Activated CD4-positive, alpha-beta memory T cell treated with anti-CD3 and anti-CD28 coated beads for 36 hours (primary cell): ENCODE measurements at regions of chr2 and their contacts with region 1.

Region 1: DNA sequence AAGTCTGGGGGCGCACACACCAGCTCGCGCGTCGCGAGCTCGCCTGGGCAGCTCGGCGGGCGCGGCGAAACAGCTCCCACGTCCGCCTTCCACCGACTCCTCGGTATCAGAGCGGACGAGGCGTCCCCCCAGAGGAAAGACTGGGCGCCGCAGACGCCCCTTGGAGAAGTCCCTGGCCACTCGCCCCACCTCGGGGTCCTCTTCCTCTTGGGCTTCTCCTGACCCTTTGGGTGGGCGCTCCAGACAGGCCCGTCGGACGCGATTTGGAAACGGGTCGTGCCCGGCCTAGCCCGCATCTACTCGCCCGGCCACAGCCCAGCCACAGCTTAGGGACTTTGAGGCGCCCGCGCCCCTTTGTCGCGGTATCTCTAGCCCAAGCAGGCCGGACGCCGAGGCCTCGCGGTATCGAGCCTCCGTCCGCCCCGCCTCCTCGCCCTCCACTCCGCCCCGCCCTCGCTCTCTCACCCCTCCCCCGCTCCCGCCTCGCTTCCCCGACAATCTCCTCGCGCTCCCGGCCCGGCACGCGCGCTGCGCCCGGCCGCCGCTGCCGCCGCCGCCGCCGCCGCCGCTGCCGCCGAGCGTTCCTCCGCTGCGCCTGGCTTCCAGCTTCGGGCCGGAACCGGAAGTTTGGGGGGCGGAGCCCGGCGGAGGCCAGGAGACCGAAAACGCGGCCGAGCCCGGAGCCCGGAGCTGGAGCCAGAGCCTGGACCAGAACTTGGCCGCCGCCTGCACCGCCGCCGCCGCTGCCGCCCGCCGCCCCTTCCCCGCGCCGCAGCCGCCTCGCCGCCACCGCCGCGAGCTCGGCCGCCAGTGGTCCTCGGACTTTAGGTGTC is 749 bp upstream of the ACVR2A start:
- DNase-seq: peak; percentile 91
- H3K4me3 Mint-ChIP-seq: peak overlapping the region; percentile 89
- H3K27ac Mint-ChIP-seq: peak overlapping the region; percentile 63
- H3K4me1 Mint-ChIP-seq: peaks cover 28% of the 10 kb centered on the region
- H3K27me3 Mint-ChIP-seq: peaks cover 8% of the 10 kb centered on the region

Region 2: DNA sequence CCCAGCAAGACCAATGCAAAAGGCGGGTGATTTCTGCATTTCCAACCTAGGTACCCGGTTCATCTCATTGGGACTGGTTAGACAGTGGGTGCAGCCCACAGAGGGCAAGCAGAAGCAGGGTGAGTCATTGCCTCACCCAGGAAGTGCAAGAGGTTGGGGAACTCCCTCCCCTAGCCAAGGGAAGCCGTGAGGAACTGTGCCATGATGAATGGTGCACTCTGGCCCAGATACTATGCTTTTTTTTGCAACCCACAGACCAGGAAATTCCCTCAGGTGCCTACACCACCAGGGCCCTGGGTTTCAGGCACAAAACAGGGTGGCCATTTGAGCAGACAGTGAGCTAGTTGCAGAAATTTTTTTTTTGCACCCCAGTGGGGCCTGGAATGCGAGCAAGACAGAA is 661.8 kb before region 1 on chr2:
- CTCF ChIA-PET with region 1: no interaction called
- POLR2A ChIA-PET with region 1: no interaction called
- intact Hi-C with region 1: loop called (anchors 10 kb)
- DNase-seq: peak; percentile 82
- H3K4me3 Mint-ChIP-seq: no peak overlapping the region
- H3K27ac Mint-ChIP-seq: peak overlapping the region; percentile 77
- H3K4me1 Mint-ChIP-seq: peaks cover 29% of the 10 kb centered on the region
- H3K27me3 Mint-ChIP-seq: no peaks in the 10 kb centered on the region

Region 3: DNA sequence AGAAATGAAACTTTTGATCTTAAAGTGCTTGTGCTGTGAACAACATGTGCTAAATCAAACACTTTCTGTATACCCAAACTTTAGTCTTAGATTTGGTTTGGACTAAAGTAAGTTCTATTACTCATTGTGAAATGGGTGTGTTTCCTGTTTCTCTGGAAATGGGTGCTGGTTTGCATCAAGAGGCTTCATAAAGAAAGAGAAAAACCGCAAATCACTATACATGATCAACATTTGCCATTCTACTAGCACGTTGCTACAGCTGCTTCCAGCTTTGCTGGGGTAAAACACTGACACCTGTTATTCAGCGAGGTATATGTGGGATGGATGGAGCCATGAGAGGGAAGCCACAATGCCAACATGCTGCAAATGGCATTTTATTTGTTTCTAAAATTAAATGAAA is 546.3 kb before region 1 on chr2:
- CTCF ChIA-PET with region 1: no interaction called
- POLR2A ChIA-PET with region 1: no interaction called
- intact Hi-C with region 1: loop called (anchors 2 kb)
- DNase-seq: peak; percentile 58
- H3K4me3 Mint-ChIP-seq: peak overlapping the region; percentile 39
- H3K27ac Mint-ChIP-seq: peak overlapping the region; percentile 89
- H3K4me1 Mint-ChIP-seq: peaks cover 73% of the 10 kb centered on the region
- H3K27me3 Mint-ChIP-seq: no peaks in the 10 kb centered on the region

Region 4: DNA sequence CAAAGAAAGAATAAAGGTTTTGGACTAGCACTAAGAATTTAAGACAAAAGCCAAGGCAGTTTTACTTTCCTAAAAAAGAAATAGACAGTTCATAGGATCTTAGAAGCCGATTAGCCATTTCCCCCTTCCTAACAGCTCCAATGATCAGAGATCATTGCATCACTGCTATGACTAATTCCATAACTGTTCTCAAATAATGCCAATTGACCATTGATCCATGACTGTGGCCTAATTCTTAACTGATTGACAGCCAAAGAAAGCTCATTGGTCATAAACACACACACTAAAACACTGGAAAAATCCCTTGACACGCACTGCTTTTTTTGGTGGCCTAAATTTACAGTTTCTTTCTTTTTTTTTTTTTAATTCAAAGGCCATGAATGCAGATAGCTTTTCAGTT is 344.3 kb before region 1 on chr2:
- CTCF ChIA-PET with region 1: no interaction called
- POLR2A ChIA-PET with region 1: no interaction called
- intact Hi-C with region 1: loop called (anchors 5 kb)
- DNase-seq: no peak
- H3K4me3 Mint-ChIP-seq: peak overlapping the region; percentile 6
- H3K27ac Mint-ChIP-seq: peak overlapping the region; percentile 64
- H3K4me1 Mint-ChIP-seq: peaks cover 43% of the 10 kb centered on the region
- H3K27me3 Mint-ChIP-seq: no peaks in the 10 kb centered on the region

Region 5: DNA sequence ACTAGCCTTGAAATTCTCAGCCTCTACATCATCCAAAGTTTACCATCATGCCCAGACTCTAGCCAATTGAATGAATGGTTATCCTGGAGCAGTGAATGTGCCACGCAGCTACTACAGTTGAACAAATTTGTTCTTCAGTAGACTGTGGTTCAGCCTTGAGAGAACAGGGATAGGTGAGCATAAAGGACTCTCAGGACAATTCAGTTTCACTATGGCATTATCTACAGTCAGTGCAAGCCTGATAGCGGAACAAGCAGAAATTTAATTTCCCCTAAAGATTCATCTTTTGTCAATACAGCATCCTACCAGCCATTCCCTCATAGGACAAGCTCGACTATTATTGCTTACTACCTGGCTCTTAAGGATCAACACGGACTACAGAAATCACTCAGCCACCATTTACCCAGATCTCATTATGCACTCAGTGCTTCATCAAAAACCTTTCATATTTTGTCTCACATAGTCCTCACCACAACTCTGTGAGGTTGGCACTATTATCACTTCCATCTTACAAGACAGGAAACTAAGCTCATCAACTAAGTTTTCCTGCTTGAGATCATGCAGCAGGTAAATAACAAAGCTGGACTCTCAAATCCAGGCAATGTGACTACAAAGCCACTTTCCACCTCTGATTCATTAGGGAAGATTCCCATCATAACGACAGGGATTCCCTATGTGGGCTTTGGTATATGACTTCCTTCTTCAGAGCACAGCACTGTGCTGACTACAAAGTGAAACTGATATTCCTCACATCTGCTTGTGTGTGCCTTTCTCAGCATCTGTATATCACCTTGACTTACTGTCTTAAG is 180.7 kb before region 1 on chr2:
- CTCF ChIA-PET with region 1: no interaction called
- POLR2A ChIA-PET with region 1: no interaction called
- intact Hi-C with region 1: loop called (anchors 1 kb)
- DNase-seq: peak; percentile 10
- H3K4me3 Mint-ChIP-seq: peak overlapping the region; percentile 51
- H3K27ac Mint-ChIP-seq: peak overlapping the region; percentile 82
- H3K4me1 Mint-ChIP-seq: peaks cover 24% of the 10 kb centered on the region
- H3K27me3 Mint-ChIP-seq: no peaks in the 10 kb centered on the region

Region 6: DNA sequence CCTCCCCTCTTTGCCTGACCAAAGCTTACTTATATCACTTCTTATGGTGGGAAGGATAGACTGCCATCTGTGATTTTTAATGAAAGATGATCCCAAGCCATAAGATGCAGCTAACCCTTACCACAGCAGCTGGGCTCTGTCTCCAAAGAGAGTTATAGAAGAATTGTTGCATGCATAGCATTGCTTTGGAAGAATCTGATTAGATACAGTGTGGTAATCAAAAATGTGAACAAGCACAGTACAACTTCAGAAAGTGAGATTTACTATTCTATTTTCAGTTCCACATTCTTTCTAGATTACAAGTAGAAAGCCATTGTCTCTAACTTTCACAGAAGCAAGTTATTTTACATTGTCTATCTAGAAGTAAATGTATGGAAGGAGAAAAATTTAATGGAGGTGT is 128.3 kb before region 1 on chr2:
- CTCF ChIA-PET with region 1: no interaction called
- POLR2A ChIA-PET with region 1: no interaction called
- intact Hi-C with region 1: no loop called
- DNase-seq: no peak
- H3K4me3 Mint-ChIP-seq: no peak overlapping the region
- H3K27ac Mint-ChIP-seq: no peak overlapping the region
- H3K4me1 Mint-ChIP-seq: no peaks in the 10 kb centered on the region
- H3K27me3 Mint-ChIP-seq: no peaks in the 10 kb centered on the region

Region 7: GRCh38 chr2:147863835-147864234 is 19.8 kb after region 1 on chr2:
- CTCF ChIA-PET with region 1: interaction called, 3 read pairs
- POLR2A ChIA-PET with region 1: interaction called, 3 read pairs
- intact Hi-C with region 1: loop called (anchors 1 kb)
- DNase-seq: no peak
- H3K4me3 Mint-ChIP-seq: no peak overlapping the region
- H3K27ac Mint-ChIP-seq: no peak overlapping the region
- H3K4me1 Mint-ChIP-seq: peaks cover 39% of the 10 kb centered on the region
- H3K27me3 Mint-ChIP-seq: no peaks in the 10 kb centered on the region

Region 8: DNA sequence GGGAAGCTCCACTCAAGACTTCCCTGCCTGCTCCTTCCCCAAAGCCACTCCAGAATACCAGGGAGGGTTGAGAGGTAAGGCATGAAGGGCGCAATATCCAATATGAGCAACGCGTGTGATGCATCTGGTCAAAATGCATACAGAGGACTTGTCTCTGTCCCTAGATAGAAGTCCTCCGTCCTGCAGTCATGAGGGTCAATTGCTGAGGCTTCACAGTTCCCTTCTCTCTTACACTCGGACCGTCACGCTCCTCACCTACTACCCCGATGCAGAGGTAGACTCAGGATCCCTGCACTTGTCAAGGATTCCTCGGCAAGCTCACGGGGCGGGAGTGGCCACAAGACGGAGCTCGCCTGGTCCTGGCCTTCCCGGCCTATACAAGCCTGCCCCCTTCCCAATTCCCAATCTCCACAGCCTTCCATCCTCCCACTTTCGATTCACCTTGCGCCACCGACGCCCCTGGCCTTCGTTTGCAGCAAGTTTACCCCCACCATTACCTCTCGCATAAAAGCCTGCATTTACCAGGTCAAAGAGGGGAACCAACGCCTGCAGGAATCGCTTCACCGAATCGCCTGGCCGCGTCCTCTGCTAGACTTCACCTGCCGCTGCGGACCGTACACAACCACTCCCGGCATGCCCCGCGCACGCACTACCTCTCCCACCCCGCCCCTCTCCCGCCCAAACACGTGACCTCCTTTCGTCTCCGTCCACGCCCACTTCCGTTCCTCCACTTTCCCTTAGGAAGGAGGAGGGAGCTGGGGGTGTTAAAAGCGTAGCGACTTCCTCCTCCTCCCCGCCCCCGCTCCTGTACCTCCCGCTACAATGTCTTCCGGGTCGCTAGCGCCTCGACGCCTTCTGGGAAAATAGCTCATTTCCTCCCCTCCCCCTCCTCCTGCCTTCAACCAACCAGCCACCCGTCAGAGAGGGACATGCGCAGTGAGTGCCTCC is 176.3 kb after region 1 on chr2 and contains the start of gene ORC4:
- CTCF ChIA-PET with region 1: no interaction called
- POLR2A ChIA-PET with region 1: no interaction called
- intact Hi-C with region 1: loop called (anchors 1 kb)
- DNase-seq: peak; percentile 99
- H3K4me3 Mint-ChIP-seq: peak within 1 kb of the TSS; percentile 100
- H3K27ac Mint-ChIP-seq: peak within 1 kb of the TSS; percentile 97
- H3K4me1 Mint-ChIP-seq: peaks cover 39% of the 10 kb centered on the region
- H3K27me3 Mint-ChIP-seq: no peaks in the 10 kb centered on the region
- total RNA-seq, gene ORC4: 34.1 to 34.9 TPM